K562 (cell line): ENCODE measurements at regions of chr17 and their contacts with region 1.

Region 1: GRCh38 chr17:7239091-7240027 is at the start of gene PHF23:
- DNase-seq: peak; percentile 82 to 98 (median 90)
- ATAC-seq: peak; percentile 76
- H3K4me3 ChIP-seq: peak within 1 kb of the TSS; percentile 79
- H3K27ac ChIP-seq: peak within 1 kb of the TSS; percentile 98
- H3K4me1 ChIP-seq: peaks cover 38 to 46% of the 10 kb centered on the region in 2 experiments; a peak in 4 of 5 replicates
- H3K27me3 ChIP-seq: no peaks in the 10 kb centered on the region
- CTCF ChIP-seq: no peak
- EP300 ChIP-seq: no peak
- POLR2A ChIP-seq: peak; percentile 73
- RAD21 ChIP-seq: no peak
- polyA plus RNA-seq, gene PHF23: 7.4 TPM

Region 2: GRCh38 chr17:7122381-7122780 is 117.0 kb before region 1 on chr17:
- CTCF ChIA-PET with region 1: no interaction called
- POLR2A ChIA-PET with region 1: no interaction called
- in situ Hi-C with region 1: no loop called
- intact Hi-C with region 1: no loop called
- DNase-seq: no peak
- ATAC-seq: no peak
- H3K4me3 ChIP-seq: no peak overlapping the region
- H3K27ac ChIP-seq: no peak overlapping the region
- H3K4me1 ChIP-seq: no peaks in the 10 kb centered on the region; a peak in 1 of 5 replicates
- H3K27me3 ChIP-seq: peaks cover 2 to 42% of the 10 kb centered on the region in 2 experiments; a peak in 3 of 5 replicates
- CTCF ChIP-seq: no peak
- EP300 ChIP-seq: no peak
- POLR2A ChIP-seq: no peak
- RAD21 ChIP-seq: no peak

Region 3: GRCh38 chr17:7136266-7136877 is 103.0 kb before region 1 on chr17:
- CTCF ChIA-PET with region 1: no interaction called
- POLR2A ChIA-PET with region 1: no interaction called
- in situ Hi-C with region 1: no loop called
- intact Hi-C with region 1: no loop called
- DNase-seq: peak; percentile 53 to 72 (median 68)
- ATAC-seq: no peak
- H3K4me3 ChIP-seq: no peak overlapping the region
- H3K27ac ChIP-seq: no peak overlapping the region
- H3K4me1 ChIP-seq: peaks cover 0 to 8% of the 10 kb centered on the region in 2 experiments; a peak in 2 of 5 replicates
- H3K27me3 ChIP-seq: peaks cover 16 to 41% of the 10 kb centered on the region in 2 experiments
- CTCF ChIP-seq: peak; percentile 72 to 80 (median 75)
- EP300 ChIP-seq: no peak
- POLR2A ChIP-seq: no peak
- RAD21 ChIP-seq: peak; percentile 77

Region 4: GRCh38 chr17:7219812-7220581 is 19.4 kb before region 1 on chr17 and contains the starts of genes ACADVL and DLG4:
- CTCF ChIA-PET with region 1: no interaction called
- POLR2A ChIA-PET with region 1: interaction called, 73 read pairs
- in situ Hi-C with region 1: no loop called
- intact Hi-C with region 1: no loop called
- DNase-seq: peak; percentile 75 to 89 (median 80)
- ATAC-seq: peak; percentile 88
- H3K4me3 ChIP-seq: peak within 1 kb of the TSS; percentile 87
- H3K27ac ChIP-seq: peak within 1 kb of the TSS; percentile 90
- H3K4me1 ChIP-seq: peaks cover 40 to 55% of the 10 kb centered on the region in 2 experiments
- H3K27me3 ChIP-seq: no peaks in the 10 kb centered on the region
- CTCF ChIP-seq: no peak
- EP300 ChIP-seq: peak; percentile 31; the same call in 1 of the 2 replicates
- POLR2A ChIP-seq: peak; percentile 68
- RAD21 ChIP-seq: no peak
- polyA plus RNA-seq, gene ACADVL: 25.5 to 46.2 TPM
- polyA plus RNA-seq, gene DLG4: 0.03 to 0.07 TPM

Region 5: GRCh38 chr17:7252176-7253043 is 13.1 kb after region 1 on chr17 and contains the start of gene ELP5:
- CTCF ChIA-PET with region 1: no interaction called
- POLR2A ChIA-PET with region 1: interaction called, 16 read pairs
- in situ Hi-C with region 1: no loop called
- intact Hi-C with region 1: loop called (anchors 2 kb)
- DNase-seq: peak; percentile 69 to 93 (median 84)
- ATAC-seq: peak; percentile 82
- H3K4me3 ChIP-seq: peak within 1 kb of the TSS; percentile 95
- H3K27ac ChIP-seq: peak within 1 kb of the TSS; percentile 96
- H3K4me1 ChIP-seq: peaks cover 13 to 19% of the 10 kb centered on the region in 2 experiments; a peak in 4 of 5 replicates
- H3K27me3 ChIP-seq: no peaks in the 10 kb centered on the region
- CTCF ChIP-seq: peak in 2 of 3 experiments; percentile 27 to 39; a peak in 4 of 6 replicates
- EP300 ChIP-seq: 0 out of 2 replicates have a peak, but pooled peaks have one; percentile 1
- POLR2A ChIP-seq: peak; percentile 92
- RAD21 ChIP-seq: no peak
- polyA plus RNA-seq, gene ELP5: 48.8 to 77.9 TPM

Region 6: DNA sequence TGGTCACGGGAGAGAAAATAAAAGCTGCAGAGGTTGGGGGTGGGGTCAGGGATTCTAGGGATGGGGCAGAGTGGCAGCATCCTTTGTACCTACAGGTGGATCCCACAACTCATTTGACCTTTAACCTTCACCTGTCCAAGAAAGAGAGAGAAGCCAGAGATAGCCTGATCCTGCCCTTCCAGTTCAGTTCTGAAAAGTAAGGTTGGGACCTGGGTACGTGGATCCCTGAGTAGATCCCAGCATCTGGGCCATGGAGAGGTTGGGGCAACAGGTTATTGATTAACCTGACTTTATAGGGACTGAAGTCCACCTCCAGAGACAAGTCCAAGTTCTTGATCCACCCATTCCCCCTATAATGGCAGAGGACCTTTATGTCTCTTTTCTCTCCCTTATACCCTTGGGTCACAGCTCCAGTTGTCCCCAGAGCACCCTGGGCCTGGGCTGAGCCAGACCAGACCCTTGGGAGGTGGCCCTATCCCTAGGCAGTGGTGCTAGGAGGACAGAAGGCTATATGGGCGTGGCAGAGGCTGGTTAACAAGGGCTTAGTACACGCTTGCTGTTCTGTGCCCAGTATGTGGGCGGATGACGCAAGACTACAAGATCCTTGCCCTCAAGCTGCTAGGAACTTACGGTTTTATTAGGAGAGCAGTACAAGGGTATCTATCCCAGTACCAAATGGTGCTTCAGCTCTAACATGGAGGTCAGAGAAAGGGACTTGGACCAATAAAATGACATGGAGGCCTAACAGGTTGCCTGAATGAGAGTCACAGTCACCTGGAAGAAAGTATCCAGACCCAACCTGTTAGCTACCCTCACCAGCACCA is 19.6 kb after region 1 on chr17:
- CTCF ChIA-PET with region 1: no interaction called
- POLR2A ChIA-PET with region 1: interaction called, 10 read pairs
- in situ Hi-C with region 1: no loop called
- intact Hi-C with region 1: no loop called
- DNase-seq: no peak
- ATAC-seq: no peak
- H3K4me3 ChIP-seq: no peak overlapping the region
- H3K27ac ChIP-seq: no peak overlapping the region
- H3K4me1 ChIP-seq: peaks cover 3 to 33% of the 10 kb centered on the region in 2 experiments; a peak in 4 of 5 replicates
- H3K27me3 ChIP-seq: no peaks in the 10 kb centered on the region
- CTCF ChIP-seq: no peak
- EP300 ChIP-seq: no peak
- POLR2A ChIP-seq: no peak
- RAD21 ChIP-seq: no peak

Region 7: DNA sequence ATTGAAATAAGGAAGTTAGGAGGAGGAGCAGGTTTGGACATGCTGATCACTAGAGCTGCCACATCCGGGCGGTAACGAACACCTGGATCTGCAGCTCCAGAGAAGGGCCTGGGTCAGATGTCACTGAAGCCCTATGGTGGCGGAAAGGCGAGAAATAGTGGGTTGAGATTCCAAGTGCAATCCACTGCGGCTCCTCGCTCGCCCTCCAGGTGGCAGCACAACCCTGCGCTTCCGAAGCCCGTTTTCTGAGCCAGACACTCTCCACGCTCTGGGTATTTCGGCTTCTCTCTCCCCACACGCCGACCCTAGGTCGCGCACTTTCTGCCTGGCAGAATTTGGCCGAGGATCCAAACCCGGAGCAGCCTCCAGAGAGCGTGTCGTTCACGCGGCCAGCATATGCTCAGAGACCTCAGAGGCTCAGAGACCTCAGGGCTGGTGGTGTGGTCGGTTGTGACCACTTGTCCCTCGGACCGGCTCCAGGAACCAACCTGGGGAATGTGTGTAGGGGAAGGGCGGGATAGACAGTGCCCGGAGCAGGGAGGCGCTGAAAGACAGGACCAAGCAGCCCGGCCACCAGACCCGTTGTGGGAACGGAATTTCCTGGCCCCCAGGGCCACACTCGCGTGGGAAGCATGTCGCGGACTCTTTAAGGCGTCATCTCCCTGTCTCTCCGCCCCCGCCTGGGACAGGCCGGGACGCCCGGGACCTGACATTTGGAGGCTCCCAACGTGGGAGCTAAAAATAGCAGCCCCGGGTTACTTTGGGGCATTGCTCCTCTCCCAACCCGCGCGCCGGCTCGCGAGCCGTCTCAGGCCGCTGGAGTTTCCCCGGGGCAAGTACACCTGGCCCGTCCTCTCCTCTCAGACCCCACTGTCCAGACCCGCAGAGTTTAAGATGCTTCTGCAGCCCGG is 41.4 kb after region 1 on chr17:
- CTCF ChIA-PET with region 1: no interaction called
- POLR2A ChIA-PET with region 1: interaction called, 4 read pairs
- in situ Hi-C with region 1: no loop called
- intact Hi-C with region 1: loop called (anchors 5 kb)
- DNase-seq: peak; percentile 68 to 88 (median 74)
- ATAC-seq: peak; percentile 83
- H3K4me3 ChIP-seq: peak overlapping the region; percentile 65
- H3K27ac ChIP-seq: peak overlapping the region; percentile 74
- H3K4me1 ChIP-seq: peaks cover 15 to 43% of the 10 kb centered on the region in 2 experiments; a peak in 4 of 5 replicates
- H3K27me3 ChIP-seq: no peaks in the 10 kb centered on the region
- CTCF ChIP-seq: peak; percentile 93 to 95 (median 95)
- EP300 ChIP-seq: no peak
- POLR2A ChIP-seq: peak; percentile 44; the same call in 1 of the 2 replicates
- RAD21 ChIP-seq: peak; percentile 87 to 94